Uterus (tissue), 4 donors: ENCODE measurements at regions of chr16 and their contacts with region 1.

Region 1: GRCh38 chr16:4261557-4262172 is 11.2 kb downstream of the TFAP4 start:
- DNase-seq: peak; percentile 39 to 50
- H3K4me3 ChIP-seq: no peak overlapping the region
- H3K27ac ChIP-seq: no peak overlapping the region
- H3K4me1 ChIP-seq: peaks cover 0 to 5% of the 10 kb centered on the region in 2 donors
- H3K27me3 ChIP-seq: no peaks in the 10 kb centered on the region
- CTCF ChIP-seq: peak; percentile 35 to 67 (median 54)
- POLR2A ChIP-seq: no peak

Region 2: GRCh38 chr16:4200000-4200780 is 61.5 kb before region 1 on chr16:
- intact Hi-C with region 1: loop called (anchors 10 kb)
- DNase-seq: peak; percentile 70 to 76
- H3K4me3 ChIP-seq: no peak overlapping the region
- H3K27ac ChIP-seq: no peak overlapping the region
- H3K4me1 ChIP-seq: no peaks in the 10 kb centered on the region
- H3K27me3 ChIP-seq: no peaks in the 10 kb centered on the region
- CTCF ChIP-seq: peak; percentile 54 to 89 (median 79)
- POLR2A ChIP-seq: no peak

Region 3: GRCh38 chr16:4339909-4340308 is 78.2 kb after region 1 on chr16:
- intact Hi-C with region 1: no loop called
- DNase-seq: peak; percentile 61 to 65
- H3K4me3 ChIP-seq: no peak overlapping the region
- H3K27ac ChIP-seq: peak overlapping the region in 1 of 2 donors; percentile 56
- H3K4me1 ChIP-seq: peaks cover 0 to 13% of the 10 kb centered on the region in 2 donors
- H3K27me3 ChIP-seq: no peaks in the 10 kb centered on the region
- CTCF ChIP-seq: peak in 2 of 4 experiments; percentile 11 to 14
- POLR2A ChIP-seq: no peak

Region 4: GRCh38 chr16:4454623-4455022 is 193.0 kb after region 1 on chr16:
- intact Hi-C with region 1: no loop called
- DNase-seq: no peak
- H3K4me3 ChIP-seq: no peak overlapping the region
- H3K27ac ChIP-seq: no peak overlapping the region
- H3K4me1 ChIP-seq: no peaks in the 10 kb centered on the region
- H3K27me3 ChIP-seq: no peaks in the 10 kb centered on the region
- CTCF ChIP-seq: no peak
- POLR2A ChIP-seq: no peak